Thyroid gland (tissue), 4 donors: ENCODE measurements at regions of chr4 and their contacts with region 1.

Region 1: GRCh38 chr4:127732613-127733328 is 2.6 kb downstream of the SLC25A31 start:
- DNase-seq: no peak
- H3K4me3 ChIP-seq: no peak overlapping the region
- H3K27ac ChIP-seq: no peak overlapping the region
- H3K4me1 ChIP-seq: no peaks in the 10 kb centered on the region
- H3K27me3 ChIP-seq: no peaks in the 10 kb centered on the region
- CTCF ChIP-seq: peak; percentile 27 to 65 (median 48)
- POLR2A ChIP-seq: no peak

Region 2: DNA sequence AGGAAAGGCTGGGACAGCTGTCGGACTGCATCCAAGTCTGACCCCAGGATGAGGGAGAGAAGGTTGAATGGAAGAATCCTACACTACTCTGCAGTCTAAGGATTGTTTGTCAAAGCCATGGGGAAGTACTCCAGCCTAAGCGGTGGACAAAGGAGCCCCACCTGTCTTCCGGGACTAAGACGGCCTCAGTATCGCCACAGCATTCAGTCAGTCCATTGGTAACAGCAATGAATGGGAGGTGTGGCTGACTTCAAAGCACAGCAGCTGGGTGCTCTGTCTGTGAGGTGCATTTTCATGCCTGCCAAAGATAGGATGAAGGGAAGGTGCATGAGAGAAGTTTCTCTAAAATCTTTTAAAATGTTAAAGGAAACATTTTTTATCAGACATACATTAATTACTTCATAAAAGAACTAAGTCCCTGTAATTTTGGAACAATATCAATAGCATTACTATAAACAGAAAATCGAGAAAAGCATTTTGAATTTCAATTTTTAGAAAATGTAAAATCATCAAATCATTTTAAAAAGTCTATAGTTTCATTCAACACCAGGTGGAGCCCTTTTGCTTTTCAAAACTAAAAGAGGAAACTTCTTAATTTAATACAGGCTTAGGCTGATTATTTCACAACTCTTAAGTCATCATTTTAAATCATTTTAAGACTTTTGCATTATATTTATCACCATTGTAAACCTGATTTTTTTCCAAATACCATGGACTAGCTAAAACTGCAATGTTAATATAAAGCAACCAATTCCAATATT is 127.6 kb before region 1 on chr4:
- intact Hi-C with region 1: loop called (anchors 2 kb)
- DNase-seq: no peak
- H3K4me3 ChIP-seq: no peak overlapping the region
- H3K27ac ChIP-seq: no peak overlapping the region
- H3K4me1 ChIP-seq: no peaks in the 10 kb centered on the region
- H3K27me3 ChIP-seq: no peaks in the 10 kb centered on the region
- CTCF ChIP-seq: peak in 4 of 6 experiments; percentile 42 to 66 (median 56)
- POLR2A ChIP-seq: no peak